ENCODE measurements at regions of chr6 and their contacts with region 1.

Region 1: DNA sequence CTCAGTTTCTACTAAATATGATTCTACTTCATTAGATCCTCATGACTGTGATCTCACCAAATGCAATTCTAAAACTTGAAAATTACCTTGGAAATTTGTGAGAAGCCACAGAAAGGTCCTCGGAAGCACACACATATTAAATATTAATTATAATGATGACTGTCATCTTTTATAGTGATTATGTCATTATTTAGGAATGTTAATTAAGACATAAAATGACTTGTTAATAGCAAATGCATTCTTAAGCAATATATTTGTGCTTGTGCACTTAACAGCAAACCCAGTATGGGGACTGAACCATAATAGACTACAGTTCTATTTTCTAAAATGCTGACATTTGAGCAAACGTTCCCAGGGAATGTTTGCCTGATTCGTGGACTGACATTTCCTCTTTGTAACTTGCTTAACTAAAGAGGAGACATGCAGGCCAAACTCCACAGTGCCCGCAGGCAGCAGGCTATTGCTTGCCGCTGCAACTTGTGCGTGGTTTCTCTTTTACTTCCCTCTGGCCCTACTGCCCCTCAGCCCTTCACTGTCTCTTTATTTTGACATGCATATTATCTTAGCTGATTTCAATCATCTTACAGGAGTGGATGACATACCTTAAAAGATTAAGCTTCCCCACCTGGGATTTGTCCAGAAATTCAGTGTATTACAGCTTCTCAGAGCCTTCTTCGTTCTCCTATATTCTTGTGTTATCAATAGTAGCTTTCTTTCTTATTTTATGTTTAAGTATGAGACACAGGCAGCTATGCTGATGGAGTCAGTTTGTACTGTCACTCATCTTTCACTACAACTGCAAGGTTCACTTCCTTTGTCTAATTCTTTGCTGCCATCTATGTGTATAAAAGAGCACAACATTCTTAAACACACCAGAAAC is 141.5 kb downstream of the GMDS start:
- DNase-seq: peak; percentile 63
- H3K4me3 ChIP-seq: no peak overlapping the region
- H3K27ac ChIP-seq: no peak overlapping the region
- H3K4me1 ChIP-seq: peaks cover 5% of the 10 kb centered on the region; the same call in 1 of the 2 replicates
- H3K27me3 ChIP-seq: no peaks in the 10 kb centered on the region

Region 2: DNA sequence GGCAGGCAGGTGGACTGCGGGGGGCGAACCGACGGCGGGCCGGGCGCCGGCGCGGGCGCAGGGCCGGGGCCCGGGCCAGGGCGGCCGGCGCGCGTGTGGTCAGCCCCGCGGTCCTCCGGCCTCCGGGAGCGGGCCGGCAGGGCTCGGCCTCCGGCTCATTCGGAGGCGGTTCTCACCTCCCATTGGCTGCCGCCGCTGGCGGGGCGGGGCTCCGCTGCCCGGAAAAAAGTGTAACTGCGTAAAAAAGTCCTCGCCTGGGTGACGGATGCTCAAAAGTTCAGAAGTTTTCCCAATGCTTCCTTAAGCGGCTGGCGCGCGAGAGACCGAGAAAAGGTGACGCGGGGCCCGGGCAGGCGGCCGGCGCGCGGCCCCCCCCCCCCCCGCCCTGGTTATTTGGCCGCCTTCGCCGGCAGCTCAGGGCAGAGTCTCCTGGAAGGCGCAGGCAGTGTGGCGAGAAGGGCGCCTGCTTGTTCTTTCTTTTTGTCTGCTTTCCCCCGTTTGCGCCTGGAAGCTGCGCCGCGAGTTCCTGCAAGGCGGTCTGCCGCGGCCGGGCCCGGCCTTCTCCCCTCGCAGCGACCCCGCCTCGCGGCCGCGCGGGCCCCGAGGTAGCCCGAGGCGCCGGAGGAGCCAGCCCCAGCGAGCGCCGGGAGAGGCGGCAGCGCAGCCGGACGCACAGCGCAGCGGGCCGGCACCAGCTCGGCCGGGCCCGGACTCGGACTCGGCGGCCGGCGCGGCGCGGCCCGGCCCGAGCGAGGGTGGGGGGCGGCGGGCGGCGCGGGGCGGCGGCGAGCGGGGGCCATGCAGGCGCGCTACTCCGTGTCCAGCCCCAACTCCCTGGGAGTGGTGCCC is 494.0 kb before region 1 on chr6 and contains the start of gene FOXC1:
- in situ Hi-C with region 1: loop called (anchors 10 kb)
- DNase-seq: peak; percentile 96
- H3K4me3 ChIP-seq: peak within 1 kb of the TSS; percentile 80
- H3K27ac ChIP-seq: peak within 1 kb of the TSS; percentile 71
- H3K4me1 ChIP-seq: peaks cover 6% of the 10 kb centered on the region; the same call in 1 of the 2 replicates
- H3K27me3 ChIP-seq: peaks cover 43% of the 10 kb centered on the region
- total RNA-seq, gene FOXC1: 11.1 and 13.2 TPM in 2 replicates

Region 3: DNA sequence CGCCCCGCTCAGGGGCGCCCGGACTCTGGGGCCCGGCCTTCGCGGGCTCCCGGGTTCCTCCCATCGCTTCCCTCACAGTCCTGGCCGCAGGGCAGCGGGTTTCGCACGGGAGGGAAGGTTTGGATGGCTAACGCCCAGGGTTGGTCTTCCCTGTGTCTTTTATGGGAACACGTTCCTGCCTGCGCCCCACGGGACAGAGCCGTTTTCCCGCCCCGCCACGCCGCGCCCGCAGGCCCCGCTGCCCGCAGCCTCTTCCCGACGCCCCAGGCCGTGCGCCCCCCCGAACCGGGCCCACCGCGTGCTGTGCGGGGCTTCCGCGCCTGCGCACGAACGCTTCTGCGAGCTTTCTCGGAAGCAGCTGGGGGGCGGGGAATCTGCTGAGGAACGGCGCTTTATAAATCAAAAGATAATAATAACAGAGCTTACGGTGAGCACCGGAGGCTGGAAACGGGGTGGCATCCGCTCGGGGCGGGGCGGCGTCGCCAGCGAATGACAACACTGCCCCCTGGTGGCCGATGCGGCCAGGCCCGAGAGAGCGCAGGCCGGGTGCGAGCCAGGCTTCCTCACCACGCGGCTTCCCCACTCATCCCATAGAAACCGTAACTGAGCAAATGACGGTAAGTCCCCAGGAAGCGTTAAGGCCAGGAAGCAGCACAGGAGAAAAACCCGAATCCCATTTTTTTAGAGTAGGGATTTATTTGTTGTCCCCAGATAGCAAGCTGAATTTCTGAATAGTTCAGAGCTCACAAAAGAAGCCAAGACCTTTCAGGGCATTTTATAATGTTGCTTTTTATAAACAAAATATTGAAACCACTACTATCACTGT is 530.5 kb after region 1 on chr6:
- in situ Hi-C with region 1: loop called (anchors 25 kb)
- DNase-seq: peak; percentile 85
- H3K4me3 ChIP-seq: peak overlapping the region; percentile 70
- H3K27ac ChIP-seq: peak overlapping the region; percentile 17
- H3K4me1 ChIP-seq: peaks cover 18% of the 10 kb centered on the region
- H3K27me3 ChIP-seq: no peaks in the 10 kb centered on the region